Heart right ventricle (tissue), 16 donors: ENCODE measurements at regions of chr1 and their contacts with region 1.

Region 1: DNA sequence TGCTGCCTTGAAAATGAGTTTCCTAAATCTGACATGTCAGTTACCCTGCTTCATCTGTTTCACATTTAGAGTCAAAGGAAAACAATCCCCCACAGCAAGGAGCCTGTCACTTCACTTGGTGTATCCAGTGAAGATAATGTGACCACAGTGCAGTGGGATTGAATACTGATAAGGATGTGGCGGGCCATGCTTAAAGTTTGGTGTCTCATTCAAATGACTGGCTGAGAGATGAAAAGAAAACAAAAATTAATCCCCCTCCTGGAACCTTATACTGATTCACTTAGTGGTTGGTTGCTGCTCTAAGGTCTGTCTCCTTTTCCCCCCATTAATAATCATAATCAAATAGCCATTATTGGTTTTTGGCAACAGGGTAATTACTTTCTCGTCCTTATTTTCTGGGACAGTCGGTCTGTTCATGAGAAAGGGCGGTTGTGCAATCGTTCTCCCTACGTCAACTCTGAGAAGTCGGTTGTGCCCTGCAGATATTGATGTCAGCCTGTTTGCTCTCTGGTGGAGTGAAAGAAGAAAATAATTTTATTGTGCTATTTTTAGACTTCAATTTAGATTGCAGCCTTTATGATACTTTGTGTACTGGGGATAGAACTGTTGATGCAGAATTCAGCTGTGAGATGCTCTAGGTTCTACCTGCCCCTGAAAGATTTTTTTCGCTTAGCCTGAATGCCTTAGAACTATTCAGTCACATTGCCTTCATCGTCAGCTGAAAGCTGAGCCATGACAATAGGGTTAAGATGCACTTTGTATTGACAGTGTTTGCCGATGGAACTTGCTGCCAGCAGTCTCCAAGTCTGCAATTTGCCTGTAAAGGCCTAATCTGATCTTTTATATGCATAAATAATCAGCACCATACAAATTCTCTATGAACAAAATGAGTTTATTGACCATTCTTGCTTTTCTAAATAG is 360.3 kb downstream of the DISC1 start:
- DNase-seq: peak in 1 of 2 donors; percentile 26
- ATAC-seq: peak in 4 of 8 donors; percentile 23 to 70 (median 53)
- H3K4me3 ChIP-seq: no peak overlapping the region
- H3K27ac ChIP-seq: peak overlapping the region in 3 of 10 donors; percentile 0 to 43 (median 16)
- H3K4me1 ChIP-seq: peaks cover 0 to 23% (median 10%) of the 10 kb centered on the region in 9 donors
- H3K27me3 ChIP-seq: no peaks in the 10 kb centered on the region
- CTCF ChIP-seq: no peak

Region 2: GRCh38 chr1:231557898-231558707 is 428.8 kb before region 1 on chr1:
- intact Hi-C with region 1: no loop called
- DNase-seq: peak in 1 of 2 donors; percentile 27
- ATAC-seq: peak in 7 of 8 donors; percentile 38 to 92 (median 74)
- H3K4me3 ChIP-seq: no peak overlapping the region
- H3K27ac ChIP-seq: peak overlapping the region in 3 of 10 donors; percentile 7 to 34 (median 21)
- H3K4me1 ChIP-seq: peaks cover 0 to 26% (median 22%) of the 10 kb centered on the region in 9 donors
- H3K27me3 ChIP-seq: no peaks in the 10 kb centered on the region
- CTCF ChIP-seq: no peak

Region 3: DNA sequence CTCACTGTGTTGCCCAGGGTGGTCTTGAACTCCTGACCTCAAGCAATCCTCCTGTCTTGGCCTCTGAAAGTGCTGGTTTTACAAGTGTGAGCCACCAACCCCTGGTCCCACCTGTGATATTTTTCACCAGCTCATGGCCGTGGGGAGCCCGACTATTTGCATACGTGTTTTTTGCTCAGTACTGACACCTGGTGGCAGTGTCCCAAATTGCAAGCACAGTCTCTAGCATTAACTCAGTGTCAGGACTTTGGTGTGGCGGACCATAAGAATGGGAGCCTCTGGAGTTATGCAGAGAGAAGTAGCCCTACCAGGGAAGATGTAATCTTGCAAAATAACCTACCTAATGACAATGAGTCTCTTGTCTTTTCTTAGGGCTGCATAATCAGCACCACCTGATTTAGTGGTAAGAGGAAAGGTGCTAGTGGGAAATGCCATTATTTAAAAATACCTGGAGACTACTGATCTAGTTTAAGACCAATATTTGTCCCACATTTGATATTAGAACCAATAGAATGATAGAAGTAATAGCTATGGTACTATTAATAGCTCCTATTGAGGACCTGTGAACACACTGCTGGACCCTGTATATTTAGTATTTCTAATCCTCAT is 54.9 kb before region 1 on chr1:
- intact Hi-C with region 1: loop called in 1 of 10 experiments (anchors 10 kb)
- DNase-seq: no peak
- ATAC-seq: no peak
- H3K4me3 ChIP-seq: no peak overlapping the region
- H3K27ac ChIP-seq: no peak overlapping the region
- H3K4me1 ChIP-seq: peaks cover 15 to 82% (median 62%) of the 10 kb centered on the region in 9 donors
- H3K27me3 ChIP-seq: no peaks in the 10 kb centered on the region
- CTCF ChIP-seq: peak; percentile 11 to 58 (median 38)